MCF 10A (cell line): ENCODE measurements at regions of chr1 and their contacts with region 1.

Region 1: GRCh38 chr1:67347688-67348472 is 40.2 kb downstream of the IL12RB2 start:
- DNase-seq: peak; percentile 74
- H3K4me3 Mint-ChIP-seq: peak overlapping the region; percentile 67
- H3K27ac Mint-ChIP-seq: peak overlapping the region; percentile 80
- H3K4me1 Mint-ChIP-seq: peaks cover 14% of the 10 kb centered on the region
- H3K27me3 Mint-ChIP-seq: no peaks in the 10 kb centered on the region
- CTCF ChIP-seq: peak; percentile 74

Region 2: GRCh38 chr1:66764994-66765578 is 582.8 kb before region 1 on chr1:
- CTCF ChIA-PET with region 1: no interaction called
- POLR2A ChIA-PET with region 1: no interaction called
- intact Hi-C with region 1: loop called (anchors 5 kb)
- DNase-seq: peak; percentile 65
- H3K4me3 Mint-ChIP-seq: no peak overlapping the region
- H3K27ac Mint-ChIP-seq: no peak overlapping the region
- H3K4me1 Mint-ChIP-seq: no peaks in the 10 kb centered on the region
- H3K27me3 Mint-ChIP-seq: no peaks in the 10 kb centered on the region
- CTCF ChIP-seq: peak; percentile 78

Region 3: GRCh38 chr1:67097305-67097704 is 250.6 kb before region 1 on chr1:
- CTCF ChIA-PET with region 1: no interaction called
- POLR2A ChIA-PET with region 1: no interaction called
- intact Hi-C with region 1: no loop called
- DNase-seq: no peak
- H3K4me3 Mint-ChIP-seq: no peak overlapping the region
- H3K27ac Mint-ChIP-seq: no peak overlapping the region
- H3K4me1 Mint-ChIP-seq: peaks cover 5% of the 10 kb centered on the region
- H3K27me3 Mint-ChIP-seq: no peaks in the 10 kb centered on the region
- CTCF ChIP-seq: no peak

Region 4: DNA sequence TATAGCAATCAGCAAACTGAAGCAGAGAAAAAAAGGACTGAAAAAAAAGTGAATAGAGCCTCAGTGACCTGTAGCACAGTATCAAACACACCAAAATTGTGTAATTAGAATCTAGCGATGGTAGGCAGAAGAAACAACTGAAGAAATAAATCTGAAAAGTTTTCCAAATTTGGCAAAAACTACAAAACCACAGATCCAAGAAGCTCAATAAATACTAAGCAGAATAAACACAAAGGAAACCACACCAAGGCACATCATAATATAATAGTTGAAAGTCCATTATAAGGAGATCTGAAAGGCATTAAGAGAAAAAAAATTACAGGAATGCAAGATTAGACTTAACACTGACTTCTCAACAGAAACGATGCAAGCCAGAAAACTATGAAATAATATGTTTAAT is 47.3 kb before region 1 on chr1:
- CTCF ChIA-PET with region 1: no interaction called
- POLR2A ChIA-PET with region 1: no interaction called
- intact Hi-C with region 1: no loop called
- DNase-seq: no peak
- H3K4me3 Mint-ChIP-seq: no peak overlapping the region
- H3K27ac Mint-ChIP-seq: no peak overlapping the region
- H3K4me1 Mint-ChIP-seq: no peaks in the 10 kb centered on the region
- H3K27me3 Mint-ChIP-seq: no peaks in the 10 kb centered on the region
- CTCF ChIP-seq: no peak

Region 5: DNA sequence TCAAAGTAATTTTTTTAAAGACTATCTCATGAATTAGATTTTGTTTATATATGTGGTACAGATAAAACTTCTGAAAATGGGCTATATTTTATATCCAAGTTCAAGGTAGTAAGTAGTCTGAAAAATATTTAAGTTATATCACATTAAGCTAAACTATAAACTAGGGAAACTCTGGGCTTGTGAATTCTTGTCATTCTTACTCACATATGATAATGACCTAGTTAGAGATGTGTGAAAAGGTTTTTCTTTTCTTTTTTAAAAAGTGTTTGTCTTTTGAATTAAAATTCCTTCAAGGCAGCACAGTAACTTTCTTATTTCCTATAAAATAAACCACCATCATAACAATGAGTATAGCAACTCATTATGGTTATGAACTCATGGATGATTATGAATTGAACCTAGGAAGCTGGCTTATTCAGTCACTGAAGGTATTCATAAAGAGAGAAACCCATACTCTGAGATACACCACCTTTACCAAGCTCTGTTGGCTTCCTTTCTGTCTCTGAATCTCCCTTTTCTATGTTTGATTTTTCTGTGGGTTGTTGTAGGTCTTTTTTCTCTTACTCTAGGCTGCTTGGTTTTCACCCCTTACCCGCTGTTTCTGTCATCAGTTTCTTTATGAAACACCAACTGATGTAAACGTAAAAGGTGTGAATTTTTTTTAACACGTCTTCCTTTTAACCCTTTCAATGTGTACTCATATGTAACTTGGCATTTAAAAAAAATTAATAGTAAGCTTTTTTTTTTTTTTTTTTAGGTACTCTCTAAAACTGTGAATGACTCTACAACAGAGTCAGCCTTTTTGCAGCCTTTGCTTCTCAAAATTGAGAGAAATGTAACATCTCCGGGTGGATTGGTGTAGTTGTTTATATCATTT is 15.0 kb before region 1 on chr1:
- CTCF ChIA-PET with region 1: interaction called, 15 read pairs
- POLR2A ChIA-PET with region 1: interaction called, 10 read pairs
- intact Hi-C with region 1: no loop called
- DNase-seq: no peak
- H3K4me3 Mint-ChIP-seq: no peak overlapping the region
- H3K27ac Mint-ChIP-seq: no peak overlapping the region
- H3K4me1 Mint-ChIP-seq: peaks cover 12% of the 10 kb centered on the region
- H3K27me3 Mint-ChIP-seq: no peaks in the 10 kb centered on the region
- CTCF ChIP-seq: no peak

Region 6: DNA sequence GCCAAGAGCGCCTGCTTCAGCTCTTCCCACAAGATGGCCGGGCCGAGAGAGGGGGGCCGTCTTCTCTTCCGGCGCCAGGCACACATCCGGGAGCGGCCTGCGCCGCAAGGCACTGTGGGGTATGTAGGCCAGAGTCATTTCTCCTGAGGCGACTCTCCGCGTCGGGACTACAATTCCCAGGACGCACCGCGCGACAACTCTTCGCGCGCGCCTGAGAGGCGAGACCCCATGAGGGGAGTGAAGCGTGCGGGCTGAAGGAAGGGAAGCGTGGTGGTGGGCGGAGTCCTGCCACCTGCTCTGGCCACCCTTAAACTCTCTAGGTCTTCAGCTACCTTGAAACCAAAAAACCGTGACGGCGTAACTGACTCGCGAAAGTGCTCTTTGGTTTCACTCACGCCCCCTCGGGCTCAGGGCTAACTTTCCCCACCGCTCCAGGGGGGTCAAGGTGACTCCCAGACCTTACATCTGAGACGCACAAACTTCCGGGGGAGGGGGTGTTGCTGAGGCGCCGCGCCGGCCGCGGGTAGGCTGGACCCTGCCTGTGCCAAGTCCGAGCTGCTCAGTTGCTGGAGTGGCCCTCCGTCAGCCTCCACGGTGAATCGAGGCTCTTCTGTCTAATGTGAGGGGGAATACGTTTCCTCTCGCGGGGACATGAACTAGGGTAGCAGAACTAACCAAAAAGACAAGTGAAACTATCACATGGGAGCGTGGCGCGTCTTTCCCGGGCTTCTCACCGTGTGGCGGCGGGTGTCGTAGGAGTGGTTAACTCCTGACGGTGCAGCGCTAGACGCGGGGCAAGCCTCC is 82.7 kb after region 1 on chr1 and contains the start of gene SERBP1:
- CTCF ChIA-PET with region 1: interaction called, 15 read pairs
- POLR2A ChIA-PET with region 1: interaction called, 49 read pairs
- intact Hi-C with region 1: loop called (anchors 1 kb)
- DNase-seq: peak; percentile 98
- H3K4me3 Mint-ChIP-seq: peak within 1 kb of the TSS; percentile 100
- H3K27ac Mint-ChIP-seq: peak within 1 kb of the TSS; percentile 98
- H3K4me1 Mint-ChIP-seq: peaks cover 28% of the 10 kb centered on the region
- H3K27me3 Mint-ChIP-seq: no peaks in the 10 kb centered on the region
- CTCF ChIP-seq: no peak
- total RNA-seq, gene SERBP1: 233 and 315 TPM in 2 replicates

Region 7: GRCh38 chr1:67489643-67490042 is 141.8 kb after region 1 on chr1:
- CTCF ChIA-PET with region 1: interaction called, 27 read pairs
- POLR2A ChIA-PET with region 1: no interaction called
- intact Hi-C with region 1: no loop called
- DNase-seq: peak; percentile 38
- H3K4me3 Mint-ChIP-seq: no peak overlapping the region
- H3K27ac Mint-ChIP-seq: no peak overlapping the region
- H3K4me1 Mint-ChIP-seq: no peaks in the 10 kb centered on the region
- H3K27me3 Mint-ChIP-seq: no peaks in the 10 kb centered on the region
- CTCF ChIP-seq: no peak